Heart left ventricle (tissue), 16 donors: ENCODE measurements at regions of chr20 and their contacts with region 1.

Region 1: DNA sequence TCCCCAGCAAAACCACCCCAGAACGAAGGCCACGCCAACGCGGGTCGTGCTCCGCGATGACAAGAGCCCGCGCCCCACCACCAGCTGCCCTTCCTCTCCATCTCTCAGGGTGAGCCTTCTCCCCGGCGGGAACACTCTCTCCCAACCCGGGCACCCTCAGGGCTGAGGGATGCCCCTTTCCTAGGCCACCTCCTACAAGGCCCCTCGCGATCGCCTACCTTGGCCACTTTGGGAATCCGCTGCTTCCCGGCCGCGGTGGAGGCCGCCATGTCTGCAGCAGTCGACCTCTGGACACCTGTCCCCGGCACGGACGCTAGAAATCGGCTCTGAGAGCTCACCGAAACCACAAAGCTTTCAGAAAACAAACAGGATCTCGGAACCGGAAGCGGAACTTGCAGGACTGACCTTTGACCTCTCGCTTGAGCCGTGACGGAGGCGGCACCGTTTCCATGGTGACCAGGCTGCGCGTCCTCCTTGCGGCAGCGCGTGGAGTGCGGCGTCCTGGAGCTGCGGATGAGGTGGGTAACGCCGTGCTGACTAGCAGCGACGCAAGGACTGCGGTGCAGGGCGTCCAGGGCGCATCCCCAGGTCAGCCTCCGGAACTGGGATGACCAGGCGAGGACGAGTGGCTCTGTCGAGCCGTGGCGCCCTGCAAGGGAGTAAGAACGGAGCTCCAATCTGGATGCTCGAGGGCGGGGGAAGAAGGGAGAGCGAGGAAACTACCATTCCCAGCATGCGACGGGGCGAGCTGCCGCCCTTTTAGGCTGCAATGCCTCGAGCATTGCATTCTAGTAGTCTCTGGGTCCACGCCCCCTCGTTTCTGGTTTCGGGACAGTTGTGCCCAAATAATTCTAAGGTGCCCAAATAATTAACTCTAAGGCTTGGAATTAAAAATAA is at the starts of genes CFAP61 and CRNKL1:
- DNase-seq: peak; percentile 96 to 98 (median 97)
- ATAC-seq: peak; percentile 95 to 99 (median 98)
- H3K4me3 ChIP-seq: peak within 1 kb of the TSS; percentile 67 to 99 (median 88)
- H3K27ac ChIP-seq: peak within 1 kb of the TSS; percentile 54 to 83 (median 79)
- H3K4me1 ChIP-seq: peaks cover 0 to 20% (median 12%) of the 10 kb centered on the region in 12 donors
- H3K27me3 ChIP-seq: no peaks in the 10 kb centered on the region
- CTCF ChIP-seq: peak in 1 of 12 donors; percentile 6
- POLR2A ChIP-seq: peak in 1 of 2 donors; percentile 20
- total RNA-seq, gene CFAP61: 17.5 to 102 (median 45.8) TPM
- total RNA-seq, gene CRNKL1: 13.4 to 21.5 (median 17.5) TPM

Region 2: GRCh38 chr20:20017001-20017843 is 35.1 kb before region 1 on chr20 and contains the start of gene NAA20:
- intact Hi-C with region 1: loop called in 3 of 10 experiments (anchors 5 kb)
- DNase-seq: peak; percentile 95 to 96 (median 95)
- ATAC-seq: peak; percentile 96 to 99 (median 99)
- H3K4me3 ChIP-seq: peak within 1 kb of the TSS; percentile 71 to 99 (median 82)
- H3K27ac ChIP-seq: peak within 1 kb of the TSS; percentile 14 to 85 (median 76)
- H3K4me1 ChIP-seq: peaks cover 0 to 61% (median 28%) of the 10 kb centered on the region in 12 donors
- H3K27me3 ChIP-seq: no peaks in the 10 kb centered on the region
- CTCF ChIP-seq: peak; percentile 56 to 89 (median 79)
- POLR2A ChIP-seq: peak in 1 of 2 donors; percentile 49
- total RNA-seq, gene NAA20: 36.0 to 79.8 (median 59.1) TPM

Region 3: GRCh38 chr20:20463933-20464374 is 411.6 kb after region 1 on chr20:
- intact Hi-C with region 1: no loop called
- DNase-seq: no peak
- ATAC-seq: no peak
- H3K4me3 ChIP-seq: no peak overlapping the region
- H3K27ac ChIP-seq: no peak overlapping the region
- H3K4me1 ChIP-seq: no peaks in the 10 kb centered on the region
- H3K27me3 ChIP-seq: no peaks in the 10 kb centered on the region
- CTCF ChIP-seq: no peak
- POLR2A ChIP-seq: no peak